WTC11 (cell line): ENCODE measurements at regions of chr5 and their contacts with region 1.

Region 1: DNA sequence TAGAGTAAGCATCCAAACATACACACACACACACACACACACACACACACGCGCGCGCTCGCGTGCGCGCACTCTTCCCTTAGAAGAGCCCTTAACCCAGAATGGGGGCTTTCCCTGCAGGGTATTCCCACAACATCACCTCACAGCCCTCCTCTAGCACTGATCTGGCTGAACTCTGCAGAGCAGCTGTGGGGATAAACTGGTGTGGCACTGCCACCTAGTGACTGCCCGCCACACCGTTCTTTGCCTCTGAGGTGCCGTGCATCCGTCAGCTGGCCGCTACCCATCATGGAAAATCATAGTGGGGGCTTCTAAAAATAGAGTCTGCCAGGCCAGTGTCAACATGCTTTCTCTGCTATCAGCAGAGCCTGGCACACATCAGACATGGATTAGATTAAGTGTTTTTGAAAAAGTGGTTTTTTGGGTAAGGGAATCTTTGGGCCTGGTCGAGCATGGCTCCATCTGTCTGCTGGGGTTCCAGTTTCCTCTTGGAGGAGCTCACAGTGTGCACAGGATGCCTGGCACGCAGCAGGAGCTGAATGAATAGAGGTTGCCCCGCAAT is 88.1 kb downstream of the KCNN2 start:
- DNase-seq: peak; percentile 77
- ATAC-seq: peak; percentile 93
- H3K4me3 Mint-ChIP-seq: peak overlapping the region; percentile 52
- H3K27ac Mint-ChIP-seq: no peak overlapping the region
- H3K4me1 Mint-ChIP-seq: peaks cover 54% of the 10 kb centered on the region
- H3K27me3 Mint-ChIP-seq: no peaks in the 10 kb centered on the region
- CTCF ChIP-seq: peak; percentile 61

Region 2: GRCh38 chr5:113713051-113713450 is 736.9 kb before region 1 on chr5:
- CTCF ChIA-PET with region 1: no interaction called
- POLR2A ChIA-PET with region 1: no interaction called
- DNase-seq: no peak
- ATAC-seq: no peak
- H3K4me3 Mint-ChIP-seq: no peak overlapping the region
- H3K27ac Mint-ChIP-seq: no peak overlapping the region
- H3K4me1 Mint-ChIP-seq: no peaks in the 10 kb centered on the region
- H3K27me3 Mint-ChIP-seq: peaks cover 3% of the 10 kb centered on the region
- CTCF ChIP-seq: no peak

Region 3: GRCh38 chr5:114018186-114018585 is 431.8 kb before region 1 on chr5:
- CTCF ChIA-PET with region 1: interaction called, 14 read pairs
- POLR2A ChIA-PET with region 1: no interaction called
- DNase-seq: no peak
- ATAC-seq: peak; percentile 90
- H3K4me3 Mint-ChIP-seq: no peak overlapping the region
- H3K27ac Mint-ChIP-seq: no peak overlapping the region
- H3K4me1 Mint-ChIP-seq: peaks cover 10% of the 10 kb centered on the region
- H3K27me3 Mint-ChIP-seq: no peaks in the 10 kb centered on the region
- CTCF ChIP-seq: no peak

Region 4: DNA sequence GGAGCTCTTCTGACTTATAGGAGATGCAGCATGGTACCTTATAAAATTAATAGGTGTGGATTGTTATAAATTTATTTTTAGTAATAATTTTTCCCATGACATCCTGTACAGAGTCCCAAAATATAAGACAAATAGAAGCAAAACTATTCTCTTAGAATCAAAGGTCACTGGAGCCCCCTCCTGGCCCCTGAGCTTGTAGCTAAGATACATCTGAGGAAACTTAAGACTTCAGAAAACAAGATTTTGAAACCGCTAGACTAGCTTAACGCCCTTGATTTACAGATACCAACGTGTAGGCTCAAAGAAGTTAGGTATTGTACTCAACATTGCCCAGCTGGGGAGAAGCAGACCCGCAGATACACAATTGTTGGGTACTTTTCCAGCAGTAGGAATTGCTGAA is 133.8 kb before region 1 on chr5:
- CTCF ChIA-PET with region 1: interaction called, 14 read pairs
- POLR2A ChIA-PET with region 1: no interaction called
- DNase-seq: no peak
- ATAC-seq: no peak
- H3K4me3 Mint-ChIP-seq: no peak overlapping the region
- H3K27ac Mint-ChIP-seq: no peak overlapping the region
- H3K4me1 Mint-ChIP-seq: peaks cover 20% of the 10 kb centered on the region
- H3K27me3 Mint-ChIP-seq: no peaks in the 10 kb centered on the region
- CTCF ChIP-seq: no peak

Region 5: GRCh38 chr5:114361724-114362196 is 88.2 kb before region 1 on chr5 and contains the start of gene KCNN2:
- CTCF ChIA-PET with region 1: interaction called, 156 read pairs
- POLR2A ChIA-PET with region 1: interaction called, 3 read pairs
- DNase-seq: peak; percentile 90
- ATAC-seq: peak; percentile 54
- H3K4me3 Mint-ChIP-seq: peak within 1 kb of the TSS; percentile 99
- H3K27ac Mint-ChIP-seq: peak within 1 kb of the TSS; percentile 100
- H3K4me1 Mint-ChIP-seq: peaks cover 43% of the 10 kb centered on the region
- H3K27me3 Mint-ChIP-seq: peaks cover 4% of the 10 kb centered on the region; the same call in 1 of the 2 replicates
- CTCF ChIP-seq: no peak
- total RNA-seq, gene KCNN2: 11.9 to 13.1 TPM (median 12.0 TPM) in 3 replicates

Region 6: GRCh38 chr5:114581136-114581535 is 131.2 kb after region 1 on chr5:
- CTCF ChIA-PET with region 1: no interaction called
- POLR2A ChIA-PET with region 1: no interaction called
- DNase-seq: no peak
- ATAC-seq: peak; percentile 73
- H3K4me3 Mint-ChIP-seq: no peak overlapping the region
- H3K27ac Mint-ChIP-seq: no peak overlapping the region
- H3K4me1 Mint-ChIP-seq: peaks cover 12% of the 10 kb centered on the region
- H3K27me3 Mint-ChIP-seq: no peaks in the 10 kb centered on the region
- CTCF ChIP-seq: no peak